CD8-positive, alpha-beta T cell (primary cell): ENCODE measurements at regions of chr1 and their contacts with region 1.

Region 1: GRCh38 chr1:228139944-228140656 is at the start of gene GUK1:
- DNase-seq: peak; percentile 100
- ATAC-seq: peak; percentile 88
- H3K4me3 ChIP-seq: peak within 1 kb of the TSS; percentile 91 to 99
- H3K4me3 Mint-ChIP-seq: peak within 1 kb of the TSS; percentile 94
- H3K27ac ChIP-seq: peak within 1 kb of the TSS; percentile 97 to 99
- H3K27ac Mint-ChIP-seq: peak within 1 kb of the TSS; percentile 99
- H3K4me1 ChIP-seq: peaks cover 47% of the 10 kb centered on the region
- H3K4me1 Mint-ChIP-seq: peaks cover 63% of the 10 kb centered on the region
- H3K27me3 ChIP-seq: no peaks in the 10 kb centered on the region
- H3K27me3 Mint-ChIP-seq: no peaks in the 10 kb centered on the region
- CTCF ChIP-seq: no peak
- total RNA-seq, gene GUK1: 548 to 551 TPM

Region 2: DNA sequence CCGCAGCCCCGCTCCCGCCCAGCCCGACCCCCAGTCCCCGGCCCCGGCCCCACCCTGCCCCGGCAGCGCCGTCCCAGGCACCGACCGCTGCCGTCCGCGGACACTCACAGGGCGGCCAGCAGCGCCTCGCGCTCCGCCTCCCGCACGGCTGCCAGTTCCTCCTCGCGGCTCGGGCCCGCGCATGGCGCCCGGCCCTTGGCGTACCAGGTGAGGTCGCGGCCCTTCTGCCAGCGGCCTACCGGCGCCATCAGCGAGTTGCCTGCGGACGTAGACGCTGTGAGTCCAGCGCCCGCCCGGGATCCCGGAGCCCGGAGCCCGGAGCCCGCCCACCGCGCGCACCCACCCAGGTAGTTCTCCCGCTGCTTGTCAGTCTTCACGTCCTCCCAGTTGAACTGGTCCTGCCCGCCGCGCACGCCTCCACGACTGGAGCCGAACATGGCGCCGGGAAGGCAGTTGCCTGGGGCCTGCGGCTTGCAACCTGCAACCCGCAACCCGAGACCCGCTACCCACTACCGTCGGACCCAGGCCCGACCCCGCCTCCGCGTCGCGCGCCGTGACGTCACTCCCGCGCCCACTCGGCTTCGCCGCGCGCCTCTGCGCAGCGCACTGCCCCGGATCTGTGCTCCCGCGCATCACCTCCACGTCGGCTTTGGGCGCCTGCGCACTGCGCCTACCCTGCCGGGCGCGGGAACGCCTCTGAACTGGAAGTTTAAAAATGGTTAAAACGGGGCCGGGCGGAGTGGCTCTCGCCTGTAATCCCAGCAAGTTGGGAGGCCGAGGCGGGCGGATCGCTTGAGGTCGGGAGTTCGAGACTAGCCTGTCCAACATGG is 37.1 kb before region 1 on chr1 and contains the start of gene C1orf35:
- CTCF ChIA-PET with region 1: no interaction called
- POLR2A ChIA-PET with region 1: interaction called, 8 read pairs
- intact Hi-C with region 1: loop called (anchors 1 kb)
- DNase-seq: peak; percentile 81 to 96 (median 94)
- ATAC-seq: peak; percentile 85
- H3K4me3 ChIP-seq: peak within 1 kb of the TSS; percentile 72 to 77
- H3K4me3 Mint-ChIP-seq: peak within 1 kb of the TSS; percentile 95
- H3K27ac ChIP-seq: peak within 1 kb of the TSS; percentile 80 to 91
- H3K27ac Mint-ChIP-seq: peak within 1 kb of the TSS; percentile 95
- H3K4me1 ChIP-seq: peaks cover 21% of the 10 kb centered on the region
- H3K4me1 Mint-ChIP-seq: peaks cover 25% of the 10 kb centered on the region
- H3K27me3 ChIP-seq: no peaks in the 10 kb centered on the region
- H3K27me3 Mint-ChIP-seq: no peaks in the 10 kb centered on the region
- CTCF ChIP-seq: no peak
- total RNA-seq, gene C1orf35: 28.4 to 30.2 TPM

Region 3: GRCh38 chr1:228154670-228155571 is 14.8 kb after region 1 on chr1:
- CTCF ChIA-PET with region 1: interaction called, 3 read pairs
- POLR2A ChIA-PET with region 1: interaction called, 8 read pairs
- intact Hi-C with region 1: loop called (anchors 2 kb)
- DNase-seq: peak in 3 of 9 experiments; percentile 39 to 72 (median 48)
- ATAC-seq: peak; percentile 71
- H3K4me3 ChIP-seq: no peak overlapping the region
- H3K4me3 Mint-ChIP-seq: peak overlapping the region; percentile 59
- H3K27ac ChIP-seq: no peak overlapping the region
- H3K27ac Mint-ChIP-seq: peak overlapping the region; percentile 89
- H3K4me1 ChIP-seq: peaks cover 32% of the 10 kb centered on the region
- H3K4me1 Mint-ChIP-seq: peaks cover 35% of the 10 kb centered on the region
- H3K27me3 ChIP-seq: no peaks in the 10 kb centered on the region
- H3K27me3 Mint-ChIP-seq: no peaks in the 10 kb centered on the region
- CTCF ChIP-seq: no peak

Region 4: DNA sequence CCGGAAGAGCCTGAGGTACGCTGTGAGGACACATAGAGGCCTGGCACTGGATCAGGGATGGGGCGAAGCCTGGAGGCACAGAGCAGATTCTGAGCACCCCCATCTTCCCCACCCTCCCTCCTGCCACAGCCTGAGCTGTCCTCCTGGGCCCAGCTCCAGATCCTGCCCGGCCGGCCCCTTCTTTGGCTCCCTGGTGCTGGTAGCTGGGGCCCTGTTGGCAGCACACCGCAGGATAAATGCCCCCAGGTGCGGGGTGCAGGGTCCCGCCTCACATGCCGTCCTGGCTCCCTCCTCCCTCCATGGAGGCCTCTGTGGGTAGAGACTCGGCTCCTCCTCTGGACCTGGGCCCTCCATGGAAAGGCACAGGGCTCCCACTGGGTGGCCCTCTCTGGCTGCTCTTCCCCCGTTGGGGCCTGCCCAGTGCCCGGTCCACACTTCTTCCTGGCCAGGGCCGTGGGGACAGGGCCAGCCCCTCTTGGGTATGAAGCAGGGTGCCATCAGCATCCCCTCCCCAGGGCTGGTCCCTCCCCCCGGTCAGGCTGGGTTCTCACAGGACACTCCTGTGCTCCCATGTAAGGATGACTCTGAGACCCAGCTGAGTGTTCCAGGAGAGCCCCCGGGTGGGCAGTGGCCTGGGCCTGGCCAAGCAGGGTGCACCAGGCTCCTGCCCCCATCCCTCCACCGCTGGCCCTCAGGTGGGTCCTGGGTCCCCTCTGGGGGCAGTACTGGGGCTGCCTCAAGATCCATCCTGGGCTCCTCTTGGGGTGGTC is 66.7 kb after region 1 on chr1:
- CTCF ChIA-PET with region 1: no interaction called
- POLR2A ChIA-PET with region 1: no interaction called
- intact Hi-C with region 1: no loop called
- DNase-seq: peak in 1 of 9 experiments; percentile 48
- ATAC-seq: no peak
- H3K4me3 ChIP-seq: no peak overlapping the region
- H3K4me3 Mint-ChIP-seq: no peak overlapping the region
- H3K27ac ChIP-seq: no peak overlapping the region
- H3K27ac Mint-ChIP-seq: no peak overlapping the region
- H3K4me1 ChIP-seq: no peaks in the 10 kb centered on the region
- H3K4me1 Mint-ChIP-seq: peaks cover 6% of the 10 kb centered on the region
- H3K27me3 ChIP-seq: peaks cover 0 to 9% of the 10 kb centered on the region in 2 experiments
- H3K27me3 Mint-ChIP-seq: peaks cover 10% of the 10 kb centered on the region
- CTCF ChIP-seq: no peak

Region 5: DNA sequence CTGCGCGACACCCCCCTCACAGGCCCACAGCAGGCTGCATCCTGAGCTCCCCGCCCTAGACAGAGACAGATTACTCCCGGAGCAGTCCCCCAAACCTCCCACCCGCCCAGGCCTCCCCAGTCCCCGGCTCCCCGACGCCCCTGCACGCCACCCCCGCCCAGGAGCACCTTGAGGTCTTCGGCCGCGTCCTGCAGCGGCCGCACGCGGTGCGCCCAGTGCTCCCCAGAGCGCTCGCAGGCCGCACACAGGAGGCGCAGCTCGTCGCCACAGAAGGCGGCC is 265.8 kb after region 1 on chr1:
- CTCF ChIA-PET with region 1: no interaction called
- POLR2A ChIA-PET with region 1: no interaction called
- intact Hi-C with region 1: loop called in 1 of 2 experiments (anchors 1 kb)
- DNase-seq: peak in 1 of 9 experiments; percentile 52
- ATAC-seq: peak; percentile 8
- H3K4me3 ChIP-seq: peak overlapping the region; percentile 75 to 88
- H3K4me3 Mint-ChIP-seq: peak overlapping the region; percentile 91
- H3K27ac ChIP-seq: peak overlapping the region in 1 of 2 experiments; percentile 76
- H3K27ac Mint-ChIP-seq: peak overlapping the region; percentile 87
- H3K4me1 ChIP-seq: peaks cover 42% of the 10 kb centered on the region
- H3K4me1 Mint-ChIP-seq: peaks cover 53% of the 10 kb centered on the region
- H3K27me3 ChIP-seq: no peaks in the 10 kb centered on the region
- H3K27me3 Mint-ChIP-seq: no peaks in the 10 kb centered on the region
- CTCF ChIP-seq: no peak

Region 6: DNA sequence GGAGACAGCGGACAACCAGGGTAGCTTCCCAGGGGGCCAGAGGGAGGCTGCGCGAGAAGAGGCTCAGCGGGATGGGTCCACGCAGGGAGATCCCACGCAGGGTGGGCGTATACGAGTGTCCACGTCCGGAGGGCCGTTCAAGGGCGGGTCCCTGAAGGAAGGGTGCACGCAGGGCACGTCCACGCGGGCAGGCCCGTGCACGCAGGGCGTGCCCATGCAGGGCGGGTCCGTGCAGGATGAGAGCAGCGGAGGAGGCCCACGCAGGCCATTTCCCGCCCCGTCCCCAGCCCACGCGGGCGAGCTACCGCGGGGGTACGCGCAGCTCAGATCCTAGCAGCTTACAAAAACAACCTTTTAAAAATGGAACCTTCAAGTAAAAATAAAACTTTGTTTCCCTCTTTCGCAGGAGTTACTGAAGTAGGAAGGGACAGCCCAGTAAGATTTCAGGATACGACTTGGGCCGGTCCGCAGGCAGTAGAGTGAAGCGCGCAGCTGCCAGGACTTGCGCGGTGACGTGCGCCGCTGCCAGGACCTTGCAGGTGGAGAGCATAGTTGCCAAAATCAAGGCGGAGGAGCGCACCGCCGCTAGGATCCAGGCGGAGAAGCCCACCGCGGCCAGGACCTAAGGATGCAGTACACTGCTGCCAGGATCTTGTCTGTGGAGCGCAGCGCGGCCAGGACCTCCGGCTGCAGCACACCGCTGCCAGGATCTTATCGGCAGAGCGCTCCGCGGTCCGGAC is 346.7 kb after region 1 on chr1:
- CTCF ChIA-PET with region 1: no interaction called
- POLR2A ChIA-PET with region 1: no interaction called
- intact Hi-C with region 1: loop called (anchors 1 to 10 kb)
- DNase-seq: peak; percentile 66 to 94 (median 77)
- ATAC-seq: peak; percentile 75
- H3K4me3 ChIP-seq: peak overlapping the region; percentile 88 to 90
- H3K4me3 Mint-ChIP-seq: peak overlapping the region; percentile 98
- H3K27ac ChIP-seq: peak overlapping the region; percentile 100
- H3K27ac Mint-ChIP-seq: peak overlapping the region; percentile 100
- H3K4me1 ChIP-seq: peaks cover 31% of the 10 kb centered on the region
- H3K4me1 Mint-ChIP-seq: peaks cover 37% of the 10 kb centered on the region
- H3K27me3 ChIP-seq: no peaks in the 10 kb centered on the region
- H3K27me3 Mint-ChIP-seq: no peaks in the 10 kb centered on the region
- CTCF ChIP-seq: no peak